ENCODE measurements at regions of chr11 and their contacts with region 1.

Region 1: GRCh38 chr11:250740-251299 is 14.0 kb downstream of the PSMD13 start:
- DNase-seq: no peak
- H3K4me3 ChIP-seq: no peak overlapping the region
- H3K27ac ChIP-seq: no peak overlapping the region
- H3K4me1 ChIP-seq: no peaks in the 10 kb centered on the region
- H3K27me3 ChIP-seq: no peaks in the 10 kb centered on the region
- CTCF ChIP-seq: peak; percentile 9 to 43 (median 39)
- POLR2A ChIP-seq: no peak

Region 2: GRCh38 chr11:282630-283360 is 32.0 kb after region 1 on chr11:
- intact Hi-C with region 1: loop called (anchors 2 kb)
- DNase-seq: peak in 1 of 2 donors; percentile 39
- H3K4me3 ChIP-seq: no peak overlapping the region
- H3K27ac ChIP-seq: no peak overlapping the region
- H3K4me1 ChIP-seq: no peaks in the 10 kb centered on the region
- H3K27me3 ChIP-seq: peaks cover 24 to 66% of the 10 kb centered on the region in 2 donors
- CTCF ChIP-seq: no peak
- POLR2A ChIP-seq: no peak

Region 3: GRCh38 chr11:288328-289144 is 37.7 kb after region 1 on chr11 and contains the start of gene PGGHG:
- intact Hi-C with region 1: loop called (anchors 2 kb)
- DNase-seq: peak in 1 of 2 donors; percentile 72
- H3K4me3 ChIP-seq: peak within 1 kb of the TSS; percentile 68 to 97 (median 72)
- H3K27ac ChIP-seq: peak within 1 kb of the TSS; percentile 61 to 80
- H3K4me1 ChIP-seq: peaks cover 0 to 5% of the 10 kb centered on the region in 2 donors
- H3K27me3 ChIP-seq: peaks cover 0 to 15% of the 10 kb centered on the region in 2 donors
- CTCF ChIP-seq: no peak
- POLR2A ChIP-seq: no peak
- total RNA-seq, gene PGGHG: 13.0 to 63.9 (median 37.3) TPM